Breast epithelium (tissue), 4 donors: ENCODE measurements at regions of chr2 and their contacts with region 1.

Region 1: DNA sequence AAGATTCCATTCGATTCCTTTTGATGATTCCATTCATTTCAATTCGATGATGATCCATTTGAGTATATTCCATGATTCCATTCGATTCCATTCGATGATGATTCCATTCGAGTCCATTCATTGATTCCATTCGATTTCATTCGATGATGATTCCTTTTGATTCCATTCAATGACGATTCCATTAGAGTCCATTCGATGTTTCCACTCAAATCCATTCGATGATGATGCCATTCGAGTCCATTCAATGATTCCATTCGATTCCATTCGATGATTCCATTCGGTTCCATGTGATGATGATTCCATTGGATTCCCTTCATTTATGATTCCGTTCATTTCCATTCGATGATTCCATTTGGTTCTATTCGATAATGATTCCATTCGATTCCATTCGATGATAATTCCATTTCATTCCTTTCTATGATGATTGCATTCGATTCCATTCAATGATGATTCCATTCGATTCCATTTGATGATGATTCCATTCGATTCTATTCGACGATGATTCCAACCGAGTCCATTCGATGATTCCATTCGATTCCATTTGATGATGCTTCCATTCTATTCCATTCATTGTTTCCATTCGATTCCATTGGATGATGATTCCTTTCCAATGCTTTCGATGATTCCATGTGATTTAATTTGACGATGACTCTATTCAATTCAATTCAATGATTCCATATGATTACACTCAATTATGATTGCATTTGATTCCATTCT is 1093.3 kb downstream of the RPIA start:
- DNase-seq: no peak
- H3K4me3 ChIP-seq: no peak overlapping the region
- H3K27ac ChIP-seq: no peak overlapping the region
- H3K4me1 ChIP-seq: no peaks in the 10 kb centered on the region
- H3K27me3 ChIP-seq: no peaks in the 10 kb centered on the region
- CTCF ChIP-seq: no peak
- POLR2A ChIP-seq: no peak

Region 2: DNA sequence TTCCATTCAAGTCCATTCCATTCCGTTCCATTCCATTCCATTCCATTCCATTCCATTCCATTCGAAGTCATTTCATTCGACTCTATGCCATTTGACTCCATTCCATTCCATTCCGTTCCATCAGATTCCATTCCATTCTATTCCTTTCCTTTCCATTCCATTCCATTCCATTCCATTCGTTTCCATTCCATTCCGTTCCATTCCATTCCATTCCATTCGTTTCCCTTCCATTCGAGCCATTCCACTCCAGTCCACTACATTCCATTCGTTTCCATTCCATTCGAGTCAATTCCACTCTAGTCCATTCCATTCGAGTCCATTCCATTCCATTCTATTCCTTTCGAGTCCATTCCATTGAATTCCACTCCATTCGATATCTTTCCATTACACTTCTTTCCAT is 27.1 kb after region 1 on chr2:
- intact Hi-C with region 1: loop called (anchors 1 kb)
- DNase-seq: no peak
- H3K4me3 ChIP-seq: no peak overlapping the region
- H3K27ac ChIP-seq: no peak overlapping the region
- H3K4me1 ChIP-seq: no peaks in the 10 kb centered on the region
- H3K27me3 ChIP-seq: no peaks in the 10 kb centered on the region
- CTCF ChIP-seq: no peak
- POLR2A ChIP-seq: no peak

Region 3: DNA sequence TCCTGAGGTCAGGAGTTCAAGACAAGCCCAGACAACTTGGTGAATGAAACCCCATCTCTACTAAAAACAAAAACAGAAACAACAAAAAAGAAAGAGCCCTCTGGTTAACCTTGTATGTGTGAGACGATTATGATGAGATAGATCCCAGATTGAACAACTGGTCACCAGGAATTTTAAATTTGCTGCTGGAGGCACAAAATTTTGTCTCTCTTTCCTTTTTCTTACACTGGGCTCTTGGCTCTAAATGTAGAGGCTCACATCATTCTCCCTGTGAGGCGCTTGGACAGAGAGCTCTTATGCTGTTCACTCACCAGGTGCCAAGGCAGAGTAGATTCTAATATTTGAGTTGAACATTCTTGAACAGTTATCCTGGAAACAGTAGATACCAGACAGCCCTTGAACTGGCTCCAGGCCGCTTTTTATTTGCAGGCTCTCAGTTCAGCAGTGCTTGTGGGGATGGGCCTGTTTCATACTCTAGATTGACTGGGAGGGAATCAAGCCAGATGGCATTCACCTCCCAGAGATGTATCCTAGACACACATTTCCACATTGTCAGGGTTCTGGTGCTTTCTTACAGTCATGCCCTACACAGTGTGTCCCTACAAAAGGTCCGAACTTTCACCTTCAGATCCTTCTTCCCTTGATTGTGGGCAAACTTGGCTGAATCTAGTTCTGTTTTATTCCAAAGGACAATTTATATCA is 66.2 kb after region 1 on chr2:
- intact Hi-C with region 1: no loop called
- DNase-seq: no peak
- H3K4me3 ChIP-seq: no peak overlapping the region
- H3K27ac ChIP-seq: no peak overlapping the region
- H3K4me1 ChIP-seq: no peaks in the 10 kb centered on the region
- H3K27me3 ChIP-seq: peaks cover 0 to 24% of the 10 kb centered on the region in 2 donors
- CTCF ChIP-seq: no peak
- POLR2A ChIP-seq: no peak